Activated T-helper 1 cell treated with anti-CD3 and anti-CD28 coated beads, Interleukin-12 subunit alpha, Interleukin-12 subunit beta, Interleukin-2, Interleukin-4 antibody, amounts not matched to agents 30 ng/mL and 10 ng/mL and 1 ng/mL, durations not matched to agents 14 hours and 24 hours and 36 hours (primary cell): ENCODE measurements at regions of chr20 and their contacts with region 1.

Region 1: DNA sequence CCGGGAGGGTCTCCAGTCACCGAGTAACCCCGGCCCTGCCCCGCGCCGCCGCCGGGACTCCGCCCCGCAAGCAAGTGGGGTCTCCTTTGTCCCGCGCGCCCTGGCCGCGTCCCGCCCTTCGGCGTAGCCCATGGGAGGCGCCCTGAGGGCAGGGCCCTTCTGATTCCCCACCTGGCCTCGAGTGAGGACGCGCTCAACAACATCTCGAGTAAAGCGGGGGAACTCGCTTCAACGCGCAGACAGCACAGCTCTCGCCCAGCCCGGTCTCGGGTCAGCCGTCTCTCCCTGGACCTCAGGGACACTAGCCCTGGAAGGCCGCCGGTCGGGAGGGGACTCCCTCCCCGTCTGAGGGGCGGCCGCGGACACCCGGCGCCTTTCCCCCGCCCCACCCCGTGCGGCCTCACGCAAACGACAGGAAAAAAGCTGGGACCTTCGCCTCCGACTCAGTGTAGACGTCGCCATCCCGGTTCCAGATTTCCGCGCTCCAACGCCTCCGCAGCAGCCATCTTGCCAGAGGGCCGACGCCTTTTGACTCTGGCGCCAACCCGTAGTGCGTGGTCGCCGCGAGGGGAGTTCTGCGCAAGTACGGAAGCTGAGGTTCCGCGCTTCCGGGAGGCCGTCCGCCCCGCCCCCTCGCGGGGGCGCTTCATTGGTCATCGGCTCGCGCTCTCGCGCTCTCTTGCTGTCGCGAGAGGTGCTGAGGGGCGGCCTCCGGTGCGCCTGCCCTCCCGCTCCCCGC is 412 bp upstream of the GID8 start:
- DNase-seq: peak; percentile 96
- H3K4me3 Mint-ChIP-seq: peak overlapping the region; percentile 88
- H3K27ac Mint-ChIP-seq: peak overlapping the region; percentile 98
- H3K4me1 Mint-ChIP-seq: peaks cover 41% of the 10 kb centered on the region
- H3K27me3 Mint-ChIP-seq: no peaks in the 10 kb centered on the region

Region 2: DNA sequence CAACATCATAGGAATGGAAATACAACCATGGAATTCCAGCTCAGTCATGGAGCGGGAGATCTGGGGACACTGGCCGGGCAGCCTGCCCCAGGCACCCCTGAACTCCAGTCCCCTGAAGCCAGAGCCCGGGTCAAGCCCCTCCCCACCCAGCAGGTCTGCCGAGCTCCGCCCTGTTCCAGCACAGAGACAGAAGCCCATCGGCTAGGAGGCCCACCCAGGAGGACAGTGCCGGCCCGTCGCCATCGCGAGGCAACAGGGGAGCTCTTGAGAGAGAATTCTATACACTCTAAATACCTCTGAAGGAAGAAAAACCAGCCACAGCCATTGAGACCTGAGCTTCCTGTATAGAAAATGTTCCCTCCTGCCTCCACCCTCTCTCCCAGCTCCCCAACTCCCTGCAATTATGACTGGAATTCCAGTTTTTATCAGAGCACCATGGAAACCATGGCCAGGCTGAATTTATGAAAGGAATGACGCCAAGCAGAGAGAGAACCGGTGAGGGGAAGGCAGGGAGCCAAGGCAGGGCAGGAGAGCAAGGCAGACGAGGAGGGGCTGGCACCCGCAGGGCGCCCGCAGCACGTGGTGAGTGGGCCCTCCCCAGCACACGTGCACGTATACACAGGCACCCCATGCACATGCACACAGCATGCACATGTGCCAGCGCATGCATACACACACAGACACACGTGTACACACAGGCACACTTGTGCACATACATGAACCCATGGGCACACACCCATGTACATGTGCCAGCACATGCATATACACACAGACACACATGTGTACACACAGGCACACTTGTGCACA is 168.9 kb before region 1 on chr20:
- intact Hi-C with region 1: no loop called
- DNase-seq: no peak
- H3K4me3 Mint-ChIP-seq: no peak overlapping the region
- H3K27ac Mint-ChIP-seq: no peak overlapping the region
- H3K4me1 Mint-ChIP-seq: peaks cover 4% of the 10 kb centered on the region
- H3K27me3 Mint-ChIP-seq: peaks cover 7% of the 10 kb centered on the region

Region 3: DNA sequence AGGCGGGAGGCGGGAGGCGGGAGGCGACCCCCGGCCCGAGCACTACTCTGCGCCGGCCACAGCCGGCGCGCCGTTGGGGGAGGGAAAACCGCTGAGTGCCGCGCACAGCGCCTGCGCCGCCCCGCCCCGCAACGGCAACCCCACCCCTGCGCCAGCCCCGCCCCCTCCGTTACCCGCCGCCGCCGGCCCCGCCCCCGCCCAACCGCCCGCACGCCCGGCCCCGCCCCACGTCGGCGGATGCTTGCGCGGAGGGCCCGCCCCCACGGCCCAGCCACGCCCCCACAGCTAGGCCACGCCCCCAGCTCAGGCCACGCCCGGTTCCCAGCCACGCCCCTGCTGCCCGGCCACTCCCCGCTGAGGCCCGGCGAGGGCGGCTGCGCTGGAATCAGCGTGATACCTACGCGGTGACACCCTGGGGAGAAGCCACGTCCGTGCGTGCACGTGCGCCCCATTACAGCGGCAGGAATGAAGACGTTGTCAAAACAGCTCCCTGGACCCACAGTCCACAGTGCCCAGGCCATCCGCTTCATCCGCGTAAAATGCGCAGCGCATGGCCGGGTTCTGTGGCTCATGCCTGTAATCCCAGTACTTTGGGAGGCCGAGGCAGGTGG is 75.7 kb before region 1 on chr20 and contains the start of gene TCFL5:
- intact Hi-C with region 1: loop called (anchors 5 kb)
- DNase-seq: peak; percentile 91
- H3K4me3 Mint-ChIP-seq: peak within 1 kb of the TSS; percentile 68
- H3K27ac Mint-ChIP-seq: peak within 1 kb of the TSS; percentile 34
- H3K4me1 Mint-ChIP-seq: peaks cover 6% of the 10 kb centered on the region
- H3K27me3 Mint-ChIP-seq: peaks cover 27% of the 10 kb centered on the region
- total RNA-seq, gene TCFL5: 5.7 and 5.8 TPM in 2 replicates

Region 4: GRCh38 chr20:62900052-62900691 is 37.4 kb before region 1 on chr20:
- intact Hi-C with region 1: loop called (anchors 1 kb)
- DNase-seq: peak; percentile 60
- H3K4me3 Mint-ChIP-seq: peak overlapping the region; percentile 30
- H3K27ac Mint-ChIP-seq: peak overlapping the region; percentile 70
- H3K4me1 Mint-ChIP-seq: peaks cover 37% of the 10 kb centered on the region
- H3K27me3 Mint-ChIP-seq: no peaks in the 10 kb centered on the region

Region 5: DNA sequence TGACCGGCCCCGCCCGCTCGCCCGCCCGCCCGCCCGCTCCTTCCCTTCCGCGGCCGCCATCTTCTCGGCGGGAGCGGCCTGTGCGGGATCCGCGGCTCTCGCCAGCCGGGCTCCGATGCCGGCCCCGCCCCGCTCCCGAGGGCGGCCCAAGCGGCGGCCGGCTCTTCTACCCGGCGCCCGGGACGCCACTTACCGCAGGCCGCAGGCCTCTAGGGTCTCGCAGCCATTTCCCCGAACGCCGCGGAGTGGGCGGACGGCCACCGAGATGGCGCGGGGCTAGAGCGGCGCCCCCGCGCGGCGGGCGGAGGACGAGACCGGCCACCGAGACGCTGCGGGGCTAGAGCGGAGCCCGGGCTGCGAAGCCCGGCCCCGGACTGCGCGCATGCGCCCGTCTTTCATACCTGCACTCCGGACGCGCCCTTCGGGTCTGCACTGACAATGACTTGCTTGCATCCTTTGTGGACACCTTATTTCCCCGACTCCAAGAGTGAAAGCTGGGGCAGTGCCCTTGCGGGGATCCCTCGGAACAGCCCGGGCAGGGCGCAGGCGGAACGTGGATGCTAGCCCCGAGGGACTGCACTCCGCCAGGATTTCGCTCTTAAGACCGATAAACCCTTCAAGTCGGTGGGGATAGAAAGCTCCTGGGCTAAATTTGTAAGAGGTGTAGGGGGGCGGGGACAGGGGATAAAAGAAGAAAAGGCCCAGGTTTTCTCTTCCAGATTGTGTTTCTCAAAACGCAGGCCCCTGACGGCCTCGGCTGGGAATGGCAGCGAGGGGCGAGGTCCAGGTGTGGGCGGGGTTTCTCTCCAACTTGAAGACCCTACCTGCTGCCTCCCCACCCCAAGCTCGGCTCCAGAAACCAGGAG is 11.1 kb before region 1 on chr20 and contains the start of gene DIDO1:
- intact Hi-C with region 1: loop called (anchors 1 kb)
- DNase-seq: peak; percentile 88
- H3K4me3 Mint-ChIP-seq: peak within 1 kb of the TSS; percentile 91
- H3K27ac Mint-ChIP-seq: peak within 1 kb of the TSS; percentile 91
- H3K4me1 Mint-ChIP-seq: peaks cover 70% of the 10 kb centered on the region
- H3K27me3 Mint-ChIP-seq: no peaks in the 10 kb centered on the region
- total RNA-seq, gene DIDO1: 60.5 and 60.8 TPM in 2 replicates

Region 6: GRCh38 chr20:62953839-62954703 is 16.5 kb after region 1 on chr20:
- intact Hi-C with region 1: loop called (anchors 1 kb)
- DNase-seq: peak; percentile 59
- H3K4me3 Mint-ChIP-seq: peak overlapping the region; percentile 72
- H3K27ac Mint-ChIP-seq: peak overlapping the region; percentile 84
- H3K4me1 Mint-ChIP-seq: peaks cover 15% of the 10 kb centered on the region
- H3K27me3 Mint-ChIP-seq: no peaks in the 10 kb centered on the region

Region 7: DNA sequence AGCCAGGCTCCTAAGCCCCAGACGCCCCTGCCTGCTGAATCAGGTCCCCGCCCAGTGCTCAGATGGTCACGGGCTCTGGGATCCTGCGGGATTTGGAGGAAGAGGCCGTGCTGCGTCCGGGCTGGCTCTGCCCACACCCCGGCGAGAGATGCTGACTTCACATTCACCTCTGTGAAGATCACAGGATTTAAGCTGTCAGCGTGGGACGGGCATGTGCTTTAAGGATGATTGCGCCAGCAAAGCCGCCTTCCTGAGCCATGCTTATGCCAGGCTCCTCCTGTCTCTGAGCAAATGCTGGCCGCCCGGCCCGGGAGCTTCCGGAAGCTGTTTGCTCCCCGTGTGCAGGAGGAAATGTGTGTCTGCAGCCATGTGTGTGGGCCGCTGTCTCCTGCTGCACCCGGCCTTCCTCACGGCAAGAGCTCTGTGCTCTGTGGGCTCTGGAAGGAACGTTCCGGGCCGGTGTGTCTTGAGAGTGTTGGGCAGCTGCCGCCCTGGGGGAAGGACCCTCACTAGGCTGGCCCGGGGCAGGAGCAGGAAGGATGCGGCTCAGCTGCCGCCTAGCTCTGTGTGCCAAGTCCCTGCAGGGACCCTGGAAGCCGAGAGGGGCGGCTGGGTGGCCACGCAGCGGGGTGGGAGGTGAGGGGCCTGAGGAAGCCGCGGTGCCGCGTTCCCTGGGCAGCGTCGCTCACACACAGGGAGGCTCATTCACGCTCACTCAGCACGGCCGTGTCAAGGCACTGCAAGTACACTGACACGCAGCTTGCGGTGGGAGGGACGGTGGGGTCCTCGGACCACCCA is 88.2 kb after region 1 on chr20:
- intact Hi-C with region 1: no loop called
- DNase-seq: no peak
- H3K4me3 Mint-ChIP-seq: no peak overlapping the region
- H3K27ac Mint-ChIP-seq: no peak overlapping the region
- H3K4me1 Mint-ChIP-seq: no peaks in the 10 kb centered on the region
- H3K27me3 Mint-ChIP-seq: peaks cover 5% of the 10 kb centered on the region

Region 8: DNA sequence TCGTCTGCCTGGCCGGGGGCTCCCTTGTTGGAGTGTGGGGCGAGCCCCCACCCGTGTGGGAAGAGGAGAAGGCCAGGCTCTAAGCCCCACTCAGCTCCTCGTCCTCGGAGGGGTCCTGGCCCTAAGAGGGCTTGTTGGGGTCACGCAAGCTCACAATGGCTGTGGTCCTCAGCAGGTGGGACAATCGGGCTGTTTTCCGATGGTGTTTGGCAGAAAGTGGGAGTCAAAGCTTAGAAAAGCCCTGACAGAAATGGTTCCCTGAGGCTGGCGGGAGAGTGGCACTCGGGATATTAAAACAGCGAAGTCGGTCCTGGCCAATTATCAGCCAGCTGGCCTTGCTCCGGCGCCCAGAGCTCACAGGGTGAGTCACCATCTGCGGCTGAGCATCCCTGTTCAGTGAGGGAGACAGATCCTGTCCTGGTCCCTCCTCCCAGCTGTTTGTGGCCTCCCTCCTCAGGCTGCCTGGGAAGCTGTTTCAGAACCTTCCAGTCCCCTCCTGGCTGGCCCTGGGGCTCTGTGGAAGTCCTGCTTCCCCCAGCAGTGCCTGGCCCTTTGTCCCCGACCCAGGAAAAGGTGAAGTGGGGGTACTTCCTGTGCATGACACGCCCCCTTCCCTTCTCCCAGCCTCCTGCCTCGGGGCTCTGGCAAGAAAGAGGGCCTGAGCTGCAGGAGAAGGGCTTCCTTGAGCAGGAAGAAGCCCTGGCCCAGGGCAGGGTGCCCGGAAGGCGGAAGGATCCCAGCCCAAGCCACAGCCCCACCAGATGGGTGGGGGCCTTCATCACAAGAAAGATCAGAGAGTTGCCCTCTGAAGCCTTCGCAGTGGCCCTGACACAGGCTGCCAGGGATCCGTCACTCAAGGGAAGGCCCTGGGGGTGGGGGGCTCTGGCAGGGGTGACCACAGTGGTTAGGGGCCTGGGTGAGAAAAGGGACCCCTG is 122.8 kb after region 1 on chr20:
- intact Hi-C with region 1: no loop called
- DNase-seq: no peak
- H3K4me3 Mint-ChIP-seq: no peak overlapping the region
- H3K27ac Mint-ChIP-seq: peak overlapping the region; percentile 61
- H3K4me1 Mint-ChIP-seq: no peaks in the 10 kb centered on the region
- H3K27me3 Mint-ChIP-seq: peaks cover 2% of the 10 kb centered on the region

Region 9: GRCh38 chr20:63216041-63216848 is 278.7 kb after region 1 on chr20 and contains the start of gene YTHDF1:
- intact Hi-C with region 1: loop called (anchors 10 kb)
- DNase-seq: peak; percentile 97
- H3K4me3 Mint-ChIP-seq: peak within 1 kb of the TSS; percentile 98
- H3K27ac Mint-ChIP-seq: peak within 1 kb of the TSS; percentile 89
- H3K4me1 Mint-ChIP-seq: peaks cover 47% of the 10 kb centered on the region
- H3K27me3 Mint-ChIP-seq: no peaks in the 10 kb centered on the region
- total RNA-seq, gene YTHDF1: 48.8 and 49.0 TPM in 2 replicates

Region 10: GRCh38 chr20:63272584-63273579 is 335.3 kb after region 1 on chr20 and contains the start of gene ARFGAP1:
- intact Hi-C with region 1: loop called (anchors 5 kb)
- DNase-seq: peak; percentile 86
- H3K4me3 Mint-ChIP-seq: peak within 1 kb of the TSS; percentile 98
- H3K27ac Mint-ChIP-seq: peak within 1 kb of the TSS; percentile 89
- H3K4me1 Mint-ChIP-seq: peaks cover 23% of the 10 kb centered on the region
- H3K27me3 Mint-ChIP-seq: peaks cover 3% of the 10 kb centered on the region
- total RNA-seq, gene ARFGAP1: 102 and 107 TPM in 2 replicates